ENCODE measurements at regions of chr17 and their contacts with region 1.

Region 1: DNA sequence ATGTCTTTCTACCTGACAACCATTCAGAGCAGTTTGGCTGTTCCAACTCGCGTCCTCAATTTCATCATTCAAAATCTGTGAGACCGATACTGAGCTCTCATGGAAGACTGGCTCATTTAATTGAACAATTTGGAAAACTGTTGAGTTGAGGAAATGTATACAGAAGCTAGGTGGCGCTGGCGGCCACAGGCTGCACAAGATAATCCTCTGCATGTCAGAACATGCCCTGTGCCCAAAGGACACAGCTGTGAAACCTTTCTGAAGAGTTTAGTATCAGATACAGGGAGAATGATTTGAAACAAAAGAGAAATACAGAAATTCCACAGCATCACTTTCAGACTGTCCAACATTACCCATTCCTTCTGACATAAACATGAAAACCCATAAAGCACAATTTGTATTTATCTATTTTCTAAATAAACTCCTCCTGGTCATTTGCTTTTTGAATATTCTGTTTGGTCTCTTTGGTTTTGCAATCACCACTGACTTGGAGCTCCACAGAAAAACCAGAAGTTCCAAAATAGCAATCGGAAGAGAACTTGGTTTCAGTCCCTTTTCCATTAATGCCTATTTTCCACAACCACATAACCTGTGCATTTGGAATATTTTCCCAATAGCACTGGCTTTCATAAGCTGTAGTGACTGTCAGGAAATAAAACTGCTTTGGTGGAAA is 192.8 kb downstream of the MAP2K6 start:
- DNase-seq: peak; percentile 75
- H3K4me3 ChIP-seq: no peak overlapping the region
- H3K27ac ChIP-seq: no peak overlapping the region
- H3K4me1 ChIP-seq: no peaks in the 10 kb centered on the region
- H3K27me3 ChIP-seq: no peaks in the 10 kb centered on the region
- CTCF ChIP-seq: peak; percentile 75

Region 2: GRCh38 chr17:69672924-69673323 is 65.6 kb after region 1 on chr17:
- intact Hi-C with region 1: no loop called
- DNase-seq: no peak
- H3K4me3 ChIP-seq: no peak overlapping the region
- H3K27ac ChIP-seq: no peak overlapping the region
- H3K4me1 ChIP-seq: no peaks in the 10 kb centered on the region
- H3K27me3 ChIP-seq: no peaks in the 10 kb centered on the region
- CTCF ChIP-seq: no peak

Region 3: DNA sequence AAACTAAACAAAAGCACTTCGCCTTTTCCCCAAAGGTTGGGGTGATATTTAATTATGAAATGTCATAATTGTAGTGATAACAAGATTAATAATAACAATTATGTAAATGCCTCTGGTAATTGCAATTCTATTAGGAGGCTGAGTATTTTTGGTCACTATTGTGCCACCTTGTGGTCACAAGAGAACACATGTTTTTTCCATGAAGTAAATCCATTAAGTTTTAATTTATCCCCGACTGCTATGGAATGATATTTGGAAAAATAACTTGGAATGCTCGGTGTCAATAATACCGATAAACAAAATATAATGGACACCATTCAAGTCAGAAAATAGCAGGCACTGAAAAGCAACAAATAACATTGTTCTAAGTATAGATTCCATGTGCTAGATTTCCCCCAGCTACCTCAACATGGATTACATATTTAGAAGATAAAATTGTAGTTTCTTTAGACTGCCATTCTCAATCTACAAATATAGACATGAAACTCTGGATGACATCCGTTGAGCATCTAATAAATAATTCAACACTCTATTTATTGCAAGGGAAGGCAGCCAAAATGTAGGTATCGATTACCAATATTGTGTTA is 537.1 kb after region 1 on chr17:
- intact Hi-C with region 1: loop called (anchors 5 kb)
- DNase-seq: no peak
- H3K4me3 ChIP-seq: no peak overlapping the region
- H3K27ac ChIP-seq: no peak overlapping the region
- H3K4me1 ChIP-seq: no peaks in the 10 kb centered on the region
- H3K27me3 ChIP-seq: no peaks in the 10 kb centered on the region
- CTCF ChIP-seq: peak; percentile 61

Region 4: DNA sequence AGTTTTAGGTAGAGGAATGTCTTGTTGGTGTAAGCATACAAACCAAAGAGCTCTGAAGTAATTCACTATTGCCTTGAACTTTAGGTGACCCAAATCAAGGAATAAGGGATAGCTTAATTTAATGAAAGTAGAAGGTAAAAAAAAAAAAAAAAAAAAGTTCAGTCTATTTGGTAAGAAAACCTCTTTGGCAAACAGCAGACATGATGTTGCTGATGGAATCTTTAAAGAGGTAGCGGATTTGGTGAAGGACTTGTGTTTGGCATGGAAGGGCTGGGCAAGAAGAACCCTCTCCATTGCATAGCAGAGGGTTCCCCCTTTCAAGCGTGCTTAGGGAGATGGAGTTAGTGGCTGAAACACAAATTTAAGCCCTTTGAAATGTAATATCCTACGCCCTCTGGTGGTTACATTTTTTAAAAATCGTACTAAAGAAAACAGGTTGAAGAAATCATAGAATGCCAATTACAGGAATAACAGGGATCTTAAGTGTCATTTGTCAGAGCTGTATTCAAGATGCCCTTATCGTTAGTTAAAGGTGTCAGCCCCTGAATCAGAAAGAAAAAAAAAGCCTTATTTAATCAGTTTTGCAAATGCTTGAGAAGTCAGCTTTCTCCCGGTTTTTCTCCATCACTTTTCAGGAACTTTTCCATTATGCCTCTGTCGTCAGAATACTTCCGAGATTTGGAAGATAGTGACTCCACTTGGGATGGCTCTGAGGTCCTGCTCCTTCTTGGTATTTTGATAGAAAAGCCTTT is 945.1 kb after region 1 on chr17:
- intact Hi-C with region 1: loop called (anchors 10 kb)
- DNase-seq: no peak
- H3K4me3 ChIP-seq: no peak overlapping the region
- H3K27ac ChIP-seq: no peak overlapping the region
- H3K4me1 ChIP-seq: no peaks in the 10 kb centered on the region
- H3K27me3 ChIP-seq: no peaks in the 10 kb centered on the region
- CTCF ChIP-seq: peak; percentile 35

Region 5: DNA sequence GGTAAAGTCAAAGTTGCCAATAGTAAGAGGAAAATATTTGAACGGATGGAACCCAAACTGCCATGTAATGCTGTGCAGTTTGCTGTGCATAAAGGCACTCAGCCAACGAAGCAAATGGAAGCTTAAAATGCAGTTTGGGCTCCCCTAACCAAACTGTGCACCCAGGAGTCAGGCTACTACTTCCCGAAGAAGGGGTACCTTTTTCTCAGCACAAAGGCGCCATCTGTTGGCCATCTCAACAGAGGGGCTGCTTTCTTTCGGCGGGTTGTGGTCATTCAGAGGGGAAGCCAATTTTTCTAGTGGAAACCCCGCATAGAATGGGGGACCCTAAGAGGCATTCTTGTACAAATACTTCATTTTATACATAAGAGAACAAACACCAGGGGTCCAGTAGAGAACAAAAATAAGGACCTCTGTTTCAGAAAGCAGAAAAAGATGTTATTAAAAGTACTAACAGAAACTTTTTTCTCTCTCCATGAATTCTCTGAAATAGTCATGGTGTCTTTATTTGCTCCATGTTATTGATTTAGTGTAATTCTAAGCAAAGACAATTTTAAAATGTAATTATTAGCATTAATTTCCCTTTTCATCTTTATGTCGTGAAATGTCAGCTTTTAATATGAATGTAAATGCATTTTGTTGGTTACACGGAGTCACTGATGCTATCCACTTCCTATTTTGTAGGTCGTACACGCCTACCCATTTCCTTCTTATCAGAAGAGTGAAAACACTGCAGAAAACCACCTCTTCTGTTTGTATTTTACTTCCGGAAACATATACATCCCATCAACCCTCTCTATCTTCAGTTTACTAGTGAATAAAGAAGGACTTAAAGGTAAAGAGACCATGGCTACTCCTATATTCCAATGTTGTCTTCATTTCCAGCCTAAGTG is 1015.3 kb after region 1 on chr17:
- intact Hi-C with region 1: loop called (anchors 5 kb)
- DNase-seq: peak; percentile 63
- H3K4me3 ChIP-seq: no peak overlapping the region
- H3K27ac ChIP-seq: no peak overlapping the region
- H3K4me1 ChIP-seq: no peaks in the 10 kb centered on the region
- H3K27me3 ChIP-seq: no peaks in the 10 kb centered on the region
- CTCF ChIP-seq: peak; percentile 41